Endothelial cell of umbilical vein (primary cell): ENCODE measurements at regions of chr12 and their contacts with region 1.

Region 1: DNA sequence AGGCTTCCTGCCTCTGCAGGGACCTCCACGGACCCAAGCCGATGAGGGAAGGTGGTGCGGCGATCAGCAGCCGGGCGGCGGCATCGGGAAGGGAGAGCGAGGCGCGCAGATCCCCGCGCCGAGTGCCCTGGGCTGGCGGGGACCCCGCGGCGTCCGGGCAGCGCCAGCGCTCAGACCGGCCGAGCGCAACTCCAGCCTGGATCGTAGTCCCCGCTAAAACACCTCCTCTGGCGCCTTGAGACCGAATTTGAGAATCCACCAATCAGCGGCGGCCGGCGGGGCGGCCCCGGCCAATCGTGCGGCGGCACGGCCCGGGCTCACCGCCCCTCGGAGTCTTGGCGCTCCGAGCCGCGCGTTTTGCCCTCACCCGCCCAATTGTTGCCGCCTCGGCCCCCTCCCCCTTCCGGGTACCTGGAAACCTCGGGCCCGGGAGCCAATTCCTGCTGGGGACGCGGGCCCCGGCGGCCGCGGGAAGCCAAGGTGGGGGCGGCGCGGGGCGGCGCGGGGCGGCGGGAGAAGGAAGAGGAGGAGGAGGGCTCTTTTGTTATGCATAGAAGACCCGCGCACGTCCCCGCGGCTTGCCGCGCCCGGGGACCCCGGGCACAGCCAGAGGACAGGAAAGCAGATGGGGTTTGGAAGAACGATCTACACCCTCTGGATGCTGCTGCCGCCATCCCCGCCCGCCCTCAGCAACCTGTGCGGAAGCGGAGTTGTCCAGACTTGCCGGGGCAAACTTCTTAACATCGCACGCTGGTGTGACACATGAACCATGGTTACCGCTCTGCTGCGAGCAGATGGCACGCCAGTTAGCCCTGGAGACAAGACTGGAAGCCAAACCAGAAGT is at the start of gene E2F7:
- DNase-seq: peak; percentile 91
- H3K4me3 ChIP-seq: peak within 1 kb of the TSS; percentile 64 to 90 (median 83)
- H3K27ac ChIP-seq: peak within 1 kb of the TSS; percentile 35
- H3K4me1 ChIP-seq: peaks cover 30% of the 10 kb centered on the region
- H3K27me3 ChIP-seq: no peaks in the 10 kb centered on the region
- CTCF ChIP-seq: no peak
- POLR2A ChIP-seq: peak; percentile 70
- total RNA-seq, gene E2F7: 19.8 and 24.4 TPM in 2 replicates

Region 2: GRCh38 chr12:77102691-77103090 is 37.1 kb after region 1 on chr12:
- CTCF ChIA-PET with region 1: no interaction called
- POLR2A ChIA-PET with region 1: no interaction called
- dilution Hi-C with region 1: no loop called
- intact Hi-C with region 1: loop called (anchors 2 kb)
- DNase-seq: peak; percentile 71
- H3K4me3 ChIP-seq: no peak overlapping the region
- H3K27ac ChIP-seq: peak overlapping the region; percentile 67
- H3K4me1 ChIP-seq: peaks cover 34% of the 10 kb centered on the region
- H3K27me3 ChIP-seq: no peaks in the 10 kb centered on the region
- CTCF ChIP-seq: no peak
- POLR2A ChIP-seq: no peak

Region 3: GRCh38 chr12:77133566-77133965 is 68.0 kb after region 1 on chr12:
- CTCF ChIA-PET with region 1: no interaction called
- POLR2A ChIA-PET with region 1: no interaction called
- dilution Hi-C with region 1: no loop called
- intact Hi-C with region 1: no loop called
- DNase-seq: peak; percentile 58
- H3K4me3 ChIP-seq: no peak overlapping the region
- H3K27ac ChIP-seq: no peak overlapping the region
- H3K4me1 ChIP-seq: no peaks in the 10 kb centered on the region
- H3K27me3 ChIP-seq: peaks cover 9 to 10% of the 10 kb centered on the region in 2 experiments
- CTCF ChIP-seq: no peak
- POLR2A ChIP-seq: no peak

Region 4: DNA sequence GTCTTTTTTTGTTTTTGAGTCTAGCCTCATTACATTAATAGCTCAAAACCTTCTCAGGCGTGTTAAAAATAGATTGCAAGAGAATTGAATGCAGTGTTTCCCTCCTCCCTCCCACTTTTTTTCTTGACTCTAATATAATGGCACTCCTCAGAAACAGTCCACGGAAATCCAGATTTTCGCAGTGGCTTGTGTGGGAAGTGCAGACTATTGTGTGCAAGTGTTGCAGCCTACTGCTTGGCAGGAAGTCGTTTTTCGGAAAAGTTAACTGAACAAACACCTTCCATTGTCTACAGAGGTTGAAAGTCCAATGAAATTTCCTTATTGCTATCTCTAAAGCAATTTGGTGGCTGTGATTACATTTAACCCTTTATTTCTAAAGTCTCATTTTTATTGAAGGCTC is 147.7 kb after region 1 on chr12:
- CTCF ChIA-PET with region 1: no interaction called
- POLR2A ChIA-PET with region 1: no interaction called
- dilution Hi-C with region 1: no loop called
- intact Hi-C with region 1: loop called (anchors 2 kb)
- DNase-seq: peak; percentile 98
- H3K4me3 ChIP-seq: no peak overlapping the region
- H3K27ac ChIP-seq: peak overlapping the region; percentile 28
- H3K4me1 ChIP-seq: peaks cover 15% of the 10 kb centered on the region
- H3K27me3 ChIP-seq: peaks cover 3% of the 10 kb centered on the region in 2 experiments
- CTCF ChIP-seq: peak in 1 of 2 donors; percentile 14
- POLR2A ChIP-seq: no peak

Region 5: DNA sequence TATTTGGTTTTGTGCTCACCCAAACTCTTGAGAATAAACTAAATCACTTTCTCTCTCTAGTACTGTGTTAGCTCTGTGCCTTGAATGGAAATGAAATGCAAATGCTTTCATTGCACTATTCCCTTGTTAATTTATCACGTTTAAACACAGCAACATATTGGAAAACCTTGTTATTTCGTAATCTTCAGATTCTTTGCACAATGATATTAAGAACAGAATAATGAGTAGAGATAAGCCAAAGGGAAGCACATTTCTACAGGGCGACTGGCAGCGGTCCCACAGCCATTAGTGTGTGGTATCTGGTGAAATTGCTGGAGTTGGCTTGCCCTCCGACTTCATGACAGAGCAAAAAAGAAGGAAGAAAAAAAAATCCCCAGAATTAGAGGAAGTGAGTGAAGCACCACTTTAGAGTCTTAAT is 165.9 kb after region 1 on chr12:
- CTCF ChIA-PET with region 1: no interaction called
- POLR2A ChIA-PET with region 1: no interaction called
- dilution Hi-C with region 1: no loop called
- intact Hi-C with region 1: loop called (anchors 5 kb)
- DNase-seq: peak; percentile 93
- H3K4me3 ChIP-seq: no peak overlapping the region
- H3K27ac ChIP-seq: no peak overlapping the region
- H3K4me1 ChIP-seq: peaks cover 30% of the 10 kb centered on the region
- H3K27me3 ChIP-seq: peaks cover 9 to 10% of the 10 kb centered on the region in 2 experiments
- CTCF ChIP-seq: no peak
- POLR2A ChIP-seq: no peak

Region 6: DNA sequence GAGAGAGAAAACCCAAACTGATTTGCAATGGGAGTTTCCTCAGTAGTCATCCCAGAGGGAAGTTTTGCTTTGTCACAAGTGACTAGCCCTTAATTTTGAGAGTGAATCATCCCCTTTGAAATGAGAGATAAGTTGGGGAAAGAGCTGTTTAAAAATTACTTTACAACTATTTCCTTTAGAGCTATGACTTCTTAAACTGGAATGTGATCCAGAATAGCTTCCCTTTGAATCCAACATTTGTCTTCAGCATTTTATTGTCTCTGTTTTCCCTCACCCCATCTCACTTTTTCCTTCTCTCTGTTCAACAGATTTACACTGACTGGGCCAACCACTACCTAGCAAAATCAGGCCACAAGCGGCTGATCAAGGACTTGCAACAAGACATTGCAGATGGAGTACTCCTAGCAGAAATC is 874.4 kb after region 1 on chr12:
- CTCF ChIA-PET with region 1: no interaction called
- POLR2A ChIA-PET with region 1: no interaction called
- dilution Hi-C with region 1: no loop called
- intact Hi-C with region 1: loop called (anchors 5 kb)
- DNase-seq: peak; percentile 84
- H3K4me3 ChIP-seq: peak overlapping the region in 2 of 3 experiments; percentile 70 to 90
- H3K27ac ChIP-seq: peak overlapping the region; percentile 95
- H3K4me1 ChIP-seq: peaks cover 39% of the 10 kb centered on the region
- H3K27me3 ChIP-seq: no peaks in the 10 kb centered on the region
- CTCF ChIP-seq: no peak
- POLR2A ChIP-seq: peak; percentile 57